Activated CD4-positive, alpha-beta memory T cell treated with anti-CD3 and anti-CD28 coated beads, Interleukin-2, amount 10 ng/mL, durations not matched to agents 7 days and 5 days (primary cell): ENCODE measurements at regions of chr12 and their contacts with region 1.

Region 1: GRCh38 chr12:12384571-12385340 is 27.9 kb downstream of the BORCS5 start:
- DNase-seq: peak; percentile 85
- H3K4me3 Mint-ChIP-seq: peak overlapping the region; percentile 57
- H3K27ac Mint-ChIP-seq: peak overlapping the region; percentile 97
- H3K4me1 Mint-ChIP-seq: peaks cover 83% of the 10 kb centered on the region
- H3K27me3 Mint-ChIP-seq: no peaks in the 10 kb centered on the region

Region 2: DNA sequence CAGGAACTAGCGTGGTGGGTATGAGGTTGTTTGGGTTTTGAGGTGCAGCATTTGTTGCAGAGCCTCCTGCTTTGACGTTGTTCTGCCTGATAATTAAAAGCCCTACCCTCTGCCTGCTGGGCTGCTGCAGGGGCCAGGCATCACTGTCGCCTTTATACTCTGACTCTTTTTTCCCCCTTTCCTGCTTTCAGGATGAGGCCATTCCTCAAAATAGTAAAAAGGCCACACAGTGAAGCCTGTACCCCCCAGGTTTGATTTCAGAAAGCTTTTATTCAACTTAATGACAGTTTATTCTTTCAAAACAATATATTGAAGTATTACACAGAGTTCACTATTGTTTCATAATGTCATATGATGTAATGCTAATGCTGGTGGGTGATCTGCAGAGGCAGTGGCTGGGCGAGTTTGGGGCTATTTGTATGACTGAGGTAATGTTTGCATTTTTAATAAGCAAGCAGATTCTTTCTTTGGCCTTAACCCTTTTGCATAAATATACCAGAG is 18.8 kb before region 1 on chr12:
- CTCF ChIA-PET with region 1: no interaction called
- POLR2A ChIA-PET with region 1: no interaction called
- DNase-seq: no peak
- H3K4me3 Mint-ChIP-seq: no peak overlapping the region
- H3K27ac Mint-ChIP-seq: no peak overlapping the region
- H3K4me1 Mint-ChIP-seq: peaks cover 45% of the 10 kb centered on the region
- H3K27me3 Mint-ChIP-seq: no peaks in the 10 kb centered on the region

Region 3: GRCh38 chr12:12442548-12443071 is 57.9 kb after region 1 on chr12:
- CTCF ChIA-PET with region 1: interaction called, 11 read pairs
- POLR2A ChIA-PET with region 1: interaction called, 57 read pairs
- DNase-seq: no peak
- H3K4me3 Mint-ChIP-seq: peak overlapping the region; percentile 39
- H3K27ac Mint-ChIP-seq: peak overlapping the region; percentile 98
- H3K4me1 Mint-ChIP-seq: peaks cover 91% of the 10 kb centered on the region
- H3K27me3 Mint-ChIP-seq: no peaks in the 10 kb centered on the region

Region 4: GRCh38 chr12:12696562-12697383 is 312.0 kb after region 1 on chr12:
- CTCF ChIA-PET with region 1: no interaction called
- POLR2A ChIA-PET with region 1: interaction called, 14 read pairs
- DNase-seq: peak; percentile 93
- H3K4me3 Mint-ChIP-seq: peak overlapping the region; percentile 83
- H3K27ac Mint-ChIP-seq: peak overlapping the region; percentile 100
- H3K4me1 Mint-ChIP-seq: peaks cover 63% of the 10 kb centered on the region
- H3K27me3 Mint-ChIP-seq: no peaks in the 10 kb centered on the region